ENCODE measurements at regions of chr7 and their contacts with region 1.

Region 1: GRCh38 chr7:30173058-30173897 is 38.5 kb downstream of the MTURN start:
- DNase-seq: peak; percentile 87
- H3K4me3 ChIP-seq: no peak overlapping the region; a peak in 1 of 4 replicates
- H3K27ac ChIP-seq: peak overlapping the region; percentile 40 to 95
- H3K4me1 ChIP-seq: peaks cover 34 to 38% of the 10 kb centered on the region in 2 experiments; a peak in 3 of 4 replicates
- H3K27me3 ChIP-seq: no peaks in the 10 kb centered on the region
- CTCF ChIP-seq: peak; percentile 40
- EP300 ChIP-seq: peak in 1 of 2 experiments; percentile 79; a peak in 2 of 4 replicates
- RAD21 ChIP-seq: peak; percentile 84

Region 2: DNA sequence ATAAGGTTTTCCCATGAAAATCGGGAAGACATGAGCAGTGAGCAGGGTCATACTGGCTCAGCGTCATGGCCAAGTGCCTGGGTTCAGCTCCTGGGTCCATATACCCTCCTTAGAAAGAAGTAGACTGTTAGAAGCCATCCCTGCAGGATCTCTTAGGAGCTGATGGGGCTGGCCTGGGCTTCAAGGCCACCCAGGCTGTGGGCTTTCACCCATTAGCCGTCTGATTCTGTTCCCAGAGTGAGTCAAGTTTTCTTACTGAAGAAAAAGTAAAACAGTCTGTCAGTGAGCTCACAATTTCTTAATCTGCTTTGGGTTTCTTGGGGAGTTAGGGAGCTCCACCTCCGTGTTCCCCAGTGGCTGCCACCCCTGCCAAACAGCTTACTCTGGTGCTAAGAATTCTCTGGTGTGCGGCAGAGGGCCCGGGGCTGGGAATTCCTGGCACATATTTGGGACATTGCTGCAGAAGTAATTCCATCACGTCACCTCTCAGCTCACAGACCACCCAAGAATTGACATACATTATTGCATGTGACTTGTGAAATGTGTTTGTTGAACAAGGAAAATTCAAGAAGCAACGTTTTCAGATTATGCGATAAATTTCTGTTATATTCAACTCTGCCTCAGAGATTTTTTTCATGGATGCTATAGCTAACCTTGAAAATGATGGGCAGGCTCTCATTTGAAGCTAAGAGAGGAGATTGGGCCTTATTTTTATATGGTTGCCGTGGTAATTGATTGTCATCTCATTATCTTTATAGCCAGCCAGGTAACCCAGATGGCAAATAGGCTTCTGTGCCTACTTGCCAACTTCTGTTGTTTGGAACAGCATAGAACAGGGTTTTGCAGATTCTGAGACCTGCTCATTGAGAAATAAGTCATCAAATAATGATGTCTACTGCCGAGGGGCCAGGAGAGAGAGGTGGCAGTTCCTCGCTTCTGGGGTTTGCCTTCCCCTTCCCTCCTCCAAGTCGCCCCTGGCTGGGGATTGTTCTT is 812.3 kb before region 1 on chr7:
- CTCF ChIA-PET with region 1: no interaction called
- POLR2A ChIA-PET with region 1: no interaction called
- DNase-seq: no peak
- H3K4me3 ChIP-seq: no peak overlapping the region
- H3K27ac ChIP-seq: no peak overlapping the region
- H3K4me1 ChIP-seq: no peaks in the 10 kb centered on the region
- H3K27me3 ChIP-seq: 0 out of 2 replicates have a peak, but pooled peaks cover 11% of the 10 kb centered on the region
- CTCF ChIP-seq: no peak
- EP300 ChIP-seq: no peak
- RAD21 ChIP-seq: no peak

Region 3: DNA sequence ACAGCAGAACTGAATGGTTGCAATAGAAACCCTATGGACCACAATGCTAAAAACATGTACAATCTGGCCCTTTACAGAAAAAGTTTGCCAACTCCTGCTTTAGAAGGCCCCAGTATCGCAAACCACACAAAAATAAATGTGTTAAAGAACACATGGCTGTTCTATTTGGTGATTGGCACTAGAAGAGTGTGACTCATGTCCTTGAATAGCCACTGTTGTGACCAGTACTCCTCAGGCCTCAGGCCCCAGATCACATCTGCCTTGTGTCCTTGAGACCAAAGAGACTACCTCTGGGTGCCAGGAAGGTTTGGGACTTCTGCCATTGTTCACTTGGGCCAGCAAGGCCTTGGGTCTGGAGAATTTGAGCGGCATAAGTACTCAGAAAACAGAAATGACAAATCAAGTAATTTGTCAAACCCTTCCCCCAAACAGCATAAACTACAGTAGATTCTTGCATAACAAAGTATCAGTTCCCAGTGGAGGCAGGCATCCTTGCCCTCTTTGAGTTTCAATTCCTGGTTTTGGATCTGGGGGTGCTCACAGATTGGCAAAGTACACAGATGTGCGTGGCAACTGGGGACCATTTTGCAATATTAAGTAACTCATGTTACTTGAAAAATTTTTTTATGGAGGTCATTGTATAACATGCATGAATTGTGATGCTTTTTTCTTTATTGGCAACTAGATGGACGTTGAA is 11.7 kb after region 1 on chr7:
- CTCF ChIA-PET with region 1: interaction called, 12 read pairs
- POLR2A ChIA-PET with region 1: no interaction called
- DNase-seq: no peak
- H3K4me3 ChIP-seq: no peak overlapping the region
- H3K27ac ChIP-seq: no peak overlapping the region
- H3K4me1 ChIP-seq: no peaks in the 10 kb centered on the region
- H3K27me3 ChIP-seq: no peaks in the 10 kb centered on the region
- CTCF ChIP-seq: no peak
- EP300 ChIP-seq: no peak
- RAD21 ChIP-seq: no peak